ENCODE measurements at regions of chr9 and their contacts with region 1.

Region 1: GRCh38 chr9:83636813-83637212 is 13.9 kb downstream of the IDNK start:
- DNase-seq: no peak
- ATAC-seq: no peak
- H3K4me3 ChIP-seq: no peak overlapping the region
- H3K4me3 Mint-ChIP-seq: no peak overlapping the region
- H3K27ac ChIP-seq: no peak overlapping the region
- H3K27ac Mint-ChIP-seq: no peak overlapping the region
- H3K4me1 ChIP-seq: no peaks in the 10 kb centered on the region
- H3K4me1 Mint-ChIP-seq: no peaks in the 10 kb centered on the region
- H3K27me3 ChIP-seq: no peaks in the 10 kb centered on the region
- H3K27me3 Mint-ChIP-seq: no peaks in the 10 kb centered on the region
- CTCF ChIP-seq: no peak

Region 2: GRCh38 chr9:83622939-83623678 is 13.7 kb before region 1 on chr9 and contains the start of gene IDNK:
- CTCF ChIA-PET with region 1: interaction called, 13 read pairs
- POLR2A ChIA-PET with region 1: interaction called, 3 read pairs
- intact Hi-C with region 1: no loop called
- DNase-seq: peak; percentile 21 to 82 (median 59)
- ATAC-seq: peak; percentile 88
- H3K4me3 ChIP-seq: peak within 1 kb of the TSS; percentile 67 to 74
- H3K4me3 Mint-ChIP-seq: peak within 1 kb of the TSS; percentile 92
- H3K27ac ChIP-seq: peak within 1 kb of the TSS; percentile 78 to 82
- H3K27ac Mint-ChIP-seq: peak within 1 kb of the TSS; percentile 98
- H3K4me1 ChIP-seq: peaks cover 19% of the 10 kb centered on the region
- H3K4me1 Mint-ChIP-seq: peaks cover 33% of the 10 kb centered on the region
- H3K27me3 ChIP-seq: no peaks in the 10 kb centered on the region
- H3K27me3 Mint-ChIP-seq: no peaks in the 10 kb centered on the region
- CTCF ChIP-seq: no peak
- total RNA-seq, gene IDNK: 4.3 to 4.6 TPM

Region 3: GRCh38 chr9:84139296-84140070 is 502.7 kb after region 1 on chr9:
- CTCF ChIA-PET with region 1: no interaction called
- POLR2A ChIA-PET with region 1: no interaction called
- intact Hi-C with region 1: no loop called
- DNase-seq: no peak
- ATAC-seq: no peak
- H3K4me3 ChIP-seq: no peak overlapping the region
- H3K4me3 Mint-ChIP-seq: peak overlapping the region; percentile 58
- H3K27ac ChIP-seq: no peak overlapping the region
- H3K27ac Mint-ChIP-seq: no peak overlapping the region
- H3K4me1 ChIP-seq: no peaks in the 10 kb centered on the region
- H3K4me1 Mint-ChIP-seq: peaks cover 12% of the 10 kb centered on the region
- H3K27me3 ChIP-seq: peaks cover 9 to 13% of the 10 kb centered on the region in 2 experiments
- H3K27me3 Mint-ChIP-seq: peaks cover 51% of the 10 kb centered on the region
- CTCF ChIP-seq: no peak

Measured in CD8-positive, alpha-beta T cell (primary cell).